Thyroid gland (tissue), 4 donors: ENCODE measurements at regions of chr3 and their contacts with region 1.

Region 1: GRCh38 chr3:70064194-70064779 is 64.8 kb downstream of the SAMMSON start:
- DNase-seq: peak; percentile 18 to 29
- H3K4me3 ChIP-seq: no peak overlapping the region
- H3K27ac ChIP-seq: peak overlapping the region in 2 of 3 donors; percentile 32 to 35
- H3K4me1 ChIP-seq: peaks cover 9 to 12% of the 10 kb centered on the region in 2 donors
- H3K27me3 ChIP-seq: no peaks in the 10 kb centered on the region
- CTCF ChIP-seq: peak; percentile 35 to 93 (median 76)
- POLR2A ChIP-seq: no peak

Region 2: GRCh38 chr3:70264122-70264780 is 200.0 kb after region 1 on chr3:
- intact Hi-C with region 1: no loop called
- DNase-seq: no peak
- H3K4me3 ChIP-seq: no peak overlapping the region
- H3K27ac ChIP-seq: no peak overlapping the region
- H3K4me1 ChIP-seq: no peaks in the 10 kb centered on the region
- H3K27me3 ChIP-seq: no peaks in the 10 kb centered on the region
- CTCF ChIP-seq: no peak
- POLR2A ChIP-seq: no peak

Region 3: DNA sequence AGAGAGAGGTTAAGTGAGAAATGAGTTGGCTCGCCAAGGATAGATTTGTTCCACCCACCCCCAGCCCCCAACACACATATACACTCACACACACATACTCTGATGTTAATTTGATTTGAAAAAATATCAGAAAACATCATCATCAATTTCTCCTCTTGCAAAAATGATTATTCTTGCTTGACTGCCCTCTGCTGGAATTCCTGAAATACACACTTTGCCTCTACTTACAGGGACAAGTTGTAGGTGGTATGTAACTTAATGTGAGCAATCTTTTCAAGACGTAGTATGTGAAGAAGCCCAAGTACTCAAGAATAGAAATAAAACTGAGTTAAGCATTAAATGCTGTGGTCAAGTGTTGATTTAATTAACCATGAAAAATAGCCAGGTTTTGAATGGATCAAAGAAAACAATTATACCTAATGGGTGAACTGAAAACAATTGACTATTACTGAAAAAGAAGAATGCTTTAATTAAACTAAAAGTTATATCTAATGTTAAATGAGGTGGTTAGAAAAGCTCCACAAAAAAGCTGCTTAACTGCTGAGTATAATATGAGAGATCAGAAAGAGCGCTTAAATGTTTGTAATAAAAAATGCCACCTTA is 294.8 kb after region 1 on chr3:
- intact Hi-C with region 1: loop called (anchors 5 kb)
- DNase-seq: peak; percentile 6 to 13
- H3K4me3 ChIP-seq: no peak overlapping the region
- H3K27ac ChIP-seq: no peak overlapping the region
- H3K4me1 ChIP-seq: no peaks in the 10 kb centered on the region
- H3K27me3 ChIP-seq: no peaks in the 10 kb centered on the region
- CTCF ChIP-seq: peak; percentile 25 to 87 (median 63)
- POLR2A ChIP-seq: no peak

Region 4: GRCh38 chr3:71168880-71169411 is 1104.7 kb after region 1 on chr3:
- intact Hi-C with region 1: no loop called
- DNase-seq: no peak
- H3K4me3 ChIP-seq: no peak overlapping the region
- H3K27ac ChIP-seq: no peak overlapping the region
- H3K4me1 ChIP-seq: peaks cover 0 to 4% of the 10 kb centered on the region in 2 donors
- H3K27me3 ChIP-seq: no peaks in the 10 kb centered on the region
- CTCF ChIP-seq: no peak
- POLR2A ChIP-seq: no peak